Heart right ventricle (tissue), 16 donors: ENCODE measurements at regions of chr16 and their contacts with region 1.

Region 1: GRCh38 chr16:64307431-64307830 is 814.4 kb downstream of the CDH11 start:
- DNase-seq: no peak
- ATAC-seq: no peak
- H3K4me3 ChIP-seq: no peak overlapping the region
- H3K27ac ChIP-seq: no peak overlapping the region
- H3K4me1 ChIP-seq: peaks cover 0 to 6% (median 0%) of the 10 kb centered on the region in 9 donors
- H3K27me3 ChIP-seq: no peaks in the 10 kb centered on the region
- CTCF ChIP-seq: no peak

Region 2: GRCh38 chr16:63938661-63939060 is 368.8 kb before region 1 on chr16:
- intact Hi-C with region 1: no loop called
- DNase-seq: no peak
- ATAC-seq: no peak
- H3K4me3 ChIP-seq: no peak overlapping the region
- H3K27ac ChIP-seq: no peak overlapping the region
- H3K4me1 ChIP-seq: no peaks in the 10 kb centered on the region
- H3K27me3 ChIP-seq: no peaks in the 10 kb centered on the region
- CTCF ChIP-seq: no peak

Region 3: GRCh38 chr16:64287655-64288528 is 19.5 kb before region 1 on chr16:
- intact Hi-C with region 1: loop called in 1 of 10 experiments (anchors 1 kb)
- DNase-seq: no peak
- ATAC-seq: peak; percentile 39 to 85 (median 70)
- H3K4me3 ChIP-seq: no peak overlapping the region
- H3K27ac ChIP-seq: peak overlapping the region in 7 of 10 donors; percentile 47 to 81 (median 72)
- H3K4me1 ChIP-seq: peaks cover 0 to 11% (median 0%) of the 10 kb centered on the region in 9 donors
- H3K27me3 ChIP-seq: no peaks in the 10 kb centered on the region
- CTCF ChIP-seq: no peak

Region 4: DNA sequence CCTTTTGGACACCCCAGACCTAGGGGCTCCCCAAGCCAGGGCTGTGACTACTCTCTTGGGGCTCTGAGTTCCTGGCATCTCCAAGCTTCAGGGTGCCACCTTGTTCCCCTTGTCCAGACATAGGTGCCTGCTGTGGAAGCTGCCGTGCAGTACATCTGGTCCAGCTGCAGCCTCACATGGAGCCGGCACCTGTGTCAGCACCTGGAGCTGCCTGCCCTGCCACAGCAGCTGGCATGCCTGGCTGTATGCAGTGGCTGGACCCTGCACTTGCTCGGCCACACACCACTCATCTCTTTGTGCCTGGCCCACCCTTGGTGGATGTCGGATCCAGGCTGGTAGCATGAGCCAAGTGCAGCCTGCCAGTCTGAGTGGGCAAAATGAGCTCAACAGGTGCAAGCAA is 38.6 kb after region 1 on chr16:
- intact Hi-C with region 1: no loop called
- DNase-seq: no peak
- ATAC-seq: no peak
- H3K4me3 ChIP-seq: no peak overlapping the region
- H3K27ac ChIP-seq: no peak overlapping the region
- H3K4me1 ChIP-seq: no peaks in the 10 kb centered on the region
- H3K27me3 ChIP-seq: no peaks in the 10 kb centered on the region
- CTCF ChIP-seq: no peak